ENCODE measurements at regions of chr7 and their contacts with region 1.

Region 1: DNA sequence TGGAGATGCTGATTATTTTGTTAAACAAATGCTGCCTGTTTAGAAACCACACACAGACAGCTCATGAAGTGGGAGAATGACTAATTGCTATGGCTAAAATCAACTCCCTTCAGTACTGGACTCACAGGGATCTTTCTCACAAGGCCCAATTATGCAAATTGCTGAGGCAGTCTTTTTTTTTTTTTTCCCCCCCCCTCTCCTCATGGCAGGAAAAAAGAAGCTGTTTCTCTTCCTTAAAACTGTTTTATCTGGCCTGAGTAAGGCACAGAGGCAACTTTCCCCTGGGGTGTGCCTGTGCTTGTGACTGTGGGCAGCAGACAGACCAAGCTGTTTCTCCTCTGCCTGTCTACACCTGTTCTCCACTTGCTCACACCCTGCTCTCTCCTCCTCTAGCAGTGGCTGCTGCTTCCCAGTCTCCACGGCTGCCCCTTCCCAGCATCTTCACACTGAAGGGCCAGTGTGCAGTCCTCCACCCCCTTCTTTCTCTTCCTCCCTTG is 65.4 kb upstream of the STEAP1B start:
- DNase-seq: no peak
- H3K4me3 Mint-ChIP-seq: no peak overlapping the region
- H3K27ac Mint-ChIP-seq: no peak overlapping the region
- H3K4me1 Mint-ChIP-seq: peaks cover 45% of the 10 kb centered on the region
- H3K27me3 Mint-ChIP-seq: peaks cover 29% of the 10 kb centered on the region

Region 2: GRCh38 chr7:21580073-21580521 is 985.3 kb before region 1 on chr7:
- CTCF ChIA-PET with region 1: no interaction called
- intact Hi-C with region 1: no loop called
- DNase-seq: no peak
- H3K4me3 Mint-ChIP-seq: no peak overlapping the region
- H3K27ac Mint-ChIP-seq: peak overlapping the region; percentile 38
- H3K4me1 Mint-ChIP-seq: peaks cover 8% of the 10 kb centered on the region
- H3K27me3 Mint-ChIP-seq: peaks cover 4% of the 10 kb centered on the region

Region 3: GRCh38 chr7:22420973-22421635 is 144.3 kb before region 1 on chr7:
- CTCF ChIA-PET with region 1: no interaction called
- intact Hi-C with region 1: no loop called
- DNase-seq: no peak
- H3K4me3 Mint-ChIP-seq: no peak overlapping the region
- H3K27ac Mint-ChIP-seq: no peak overlapping the region
- H3K4me1 Mint-ChIP-seq: no peaks in the 10 kb centered on the region
- H3K27me3 Mint-ChIP-seq: no peaks in the 10 kb centered on the region

Region 4: DNA sequence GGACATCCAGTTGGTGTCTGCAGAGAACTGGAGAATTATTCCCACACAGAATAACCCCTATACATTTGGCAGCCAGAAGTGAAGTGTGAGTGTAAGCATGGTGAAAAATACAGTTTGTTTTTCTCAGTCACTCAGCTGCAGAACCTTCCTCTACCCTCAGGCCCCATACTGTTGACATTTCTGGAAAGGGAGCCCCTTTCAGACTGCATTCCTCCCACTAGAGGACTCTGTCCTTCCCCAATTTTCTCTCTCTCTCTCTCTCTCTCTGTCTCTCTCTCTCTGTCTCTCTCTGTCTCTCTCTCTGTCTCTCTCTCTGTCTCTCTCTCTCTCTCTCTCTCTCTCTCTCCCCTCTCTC is 21.4 kb after region 1 on chr7:
- CTCF ChIA-PET with region 1: interaction called, 5 read pairs
- intact Hi-C with region 1: loop called (anchors 2 kb)
- DNase-seq: no peak
- H3K4me3 Mint-ChIP-seq: no peak overlapping the region
- H3K27ac Mint-ChIP-seq: no peak overlapping the region
- H3K4me1 Mint-ChIP-seq: peaks cover 19% of the 10 kb centered on the region
- H3K27me3 Mint-ChIP-seq: peaks cover 21% of the 10 kb centered on the region

Region 5: GRCh38 chr7:22640269-22640668 is 74.9 kb after region 1 on chr7:
- CTCF ChIA-PET with region 1: interaction called, 3 read pairs
- intact Hi-C with region 1: loop called (anchors 1 kb)
- DNase-seq: peak; percentile 75
- H3K4me3 Mint-ChIP-seq: no peak overlapping the region
- H3K27ac Mint-ChIP-seq: peak overlapping the region; percentile 41
- H3K4me1 Mint-ChIP-seq: peaks cover 23% of the 10 kb centered on the region
- H3K27me3 Mint-ChIP-seq: peaks cover 8% of the 10 kb centered on the region

Region 6: GRCh38 chr7:22854158-22855048 is 289.0 kb after region 1 on chr7:
- CTCF ChIA-PET with region 1: no interaction called
- intact Hi-C with region 1: loop called (anchors 1 kb)
- DNase-seq: peak; percentile 78
- H3K4me3 Mint-ChIP-seq: peak overlapping the region; percentile 87
- H3K27ac Mint-ChIP-seq: peak overlapping the region; percentile 94
- H3K4me1 Mint-ChIP-seq: peaks cover 32% of the 10 kb centered on the region
- H3K27me3 Mint-ChIP-seq: peaks cover 3% of the 10 kb centered on the region